ENCODE measurements at regions of chr2 and their contacts with region 1.

Region 1: DNA sequence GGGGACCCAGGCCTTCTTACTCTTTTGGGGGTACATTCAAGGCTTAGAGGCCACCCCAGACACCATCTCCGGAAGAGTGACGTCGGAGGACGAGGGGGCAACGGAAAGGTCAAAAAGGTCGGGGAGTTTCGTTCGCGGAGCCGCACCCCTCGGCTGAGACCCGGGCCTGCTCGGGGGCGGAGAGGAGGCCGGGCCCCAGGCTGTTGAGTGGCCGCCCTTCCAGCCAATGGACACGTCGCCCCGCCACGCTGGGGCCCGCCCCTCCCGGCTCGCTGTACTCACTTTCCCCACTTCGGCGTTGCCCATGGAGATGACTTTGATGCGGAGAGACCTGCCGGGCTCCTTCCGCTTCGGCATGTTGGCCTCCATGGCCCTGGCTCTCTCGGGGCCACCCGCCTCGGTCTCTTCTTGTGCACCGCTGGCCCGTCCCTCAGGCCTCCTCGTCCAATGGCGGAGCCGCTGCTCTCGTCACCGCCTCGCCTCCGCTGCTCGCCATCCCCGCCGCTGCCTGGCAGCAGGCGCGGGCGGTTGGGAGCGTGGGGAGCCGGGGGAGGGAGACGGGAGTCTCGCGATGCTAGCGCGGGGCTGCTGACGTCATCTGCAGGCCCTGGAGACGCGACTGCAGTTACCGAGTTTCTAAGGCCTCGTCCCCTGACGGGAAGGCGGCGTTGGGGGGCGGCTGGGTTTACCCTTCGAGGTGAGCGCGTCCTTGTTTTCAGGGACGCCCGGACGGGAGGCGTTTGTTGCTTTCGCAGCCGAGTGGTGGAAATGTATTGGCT is at the start of gene DNAJC27:
- H3K4me3 Mint-ChIP-seq: peak within 1 kb of the TSS; percentile 100
- H3K27ac Mint-ChIP-seq: peak within 1 kb of the TSS; percentile 99
- H3K4me1 Mint-ChIP-seq: peaks cover 10% of the 10 kb centered on the region
- H3K27me3 Mint-ChIP-seq: no peaks in the 10 kb centered on the region

Region 2: DNA sequence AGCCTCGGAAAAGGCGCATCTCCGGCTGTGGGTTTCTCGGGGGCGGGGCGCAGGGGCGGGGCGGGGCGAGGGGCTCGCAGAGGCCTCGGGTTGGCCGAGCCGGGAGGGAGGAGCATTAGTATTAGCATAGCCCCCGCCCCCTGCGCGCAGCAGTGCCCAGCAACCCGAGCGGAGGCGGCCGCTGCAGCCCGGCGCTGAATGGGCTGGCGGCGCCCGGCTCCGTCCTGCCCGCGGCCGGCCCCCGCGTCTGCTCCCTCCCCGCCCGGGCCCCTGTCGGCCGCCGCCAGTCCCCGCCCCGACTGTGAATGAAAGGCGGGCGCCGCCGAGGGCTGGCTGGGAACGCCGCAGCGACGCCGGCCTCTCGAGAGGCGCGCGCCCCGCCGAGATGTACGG is 70.2 kb after region 1 on chr2 and contains the start of gene EFR3B:
- intact Hi-C with region 1: loop called (anchors 2 kb)
- H3K4me3 Mint-ChIP-seq: peak within 1 kb of the TSS; percentile 80
- H3K27ac Mint-ChIP-seq: peak within 1 kb of the TSS; percentile 16
- H3K4me1 Mint-ChIP-seq: peaks cover 33% of the 10 kb centered on the region
- H3K27me3 Mint-ChIP-seq: peaks cover 80% of the 10 kb centered on the region

Region 3: DNA sequence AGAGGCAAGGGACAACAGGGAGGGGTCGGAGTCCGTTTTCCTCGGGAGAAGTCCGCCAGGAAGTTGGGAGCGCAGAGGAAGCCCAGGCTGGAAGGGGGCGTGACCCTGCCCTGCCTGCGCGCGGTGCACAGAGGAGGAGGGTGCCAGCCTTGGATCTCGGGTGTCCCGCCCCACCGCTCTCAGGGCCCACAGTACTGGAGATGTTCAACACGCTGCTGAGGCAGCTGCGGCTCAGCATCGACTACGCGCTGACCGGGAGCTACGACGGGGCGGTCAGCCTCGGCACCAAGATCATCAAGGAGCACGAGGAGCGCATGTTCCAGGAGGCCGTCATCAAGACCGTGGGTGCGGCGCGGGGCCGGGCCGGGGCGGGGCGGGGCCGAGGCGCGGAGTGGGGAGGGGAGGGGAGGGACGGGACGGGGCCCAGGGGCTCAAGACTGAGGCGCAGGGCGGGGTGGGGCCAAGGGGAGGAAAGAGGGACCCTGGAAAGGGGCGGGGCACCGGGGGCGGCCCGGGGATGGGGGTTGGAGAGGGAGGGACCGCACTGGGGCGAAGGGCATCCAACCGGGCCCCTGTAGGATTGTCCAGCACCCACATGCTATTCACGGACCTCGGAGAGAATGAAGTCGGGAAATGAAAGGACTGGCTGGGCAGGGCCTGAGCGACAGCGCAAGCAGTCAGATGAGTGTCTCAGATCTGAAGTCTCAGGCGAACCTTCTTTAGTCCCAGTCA is 160.0 kb after region 1 on chr2:
- intact Hi-C with region 1: loop called (anchors 1 kb)
- H3K4me3 Mint-ChIP-seq: peak overlapping the region; percentile 65
- H3K27ac Mint-ChIP-seq: no peak overlapping the region
- H3K4me1 Mint-ChIP-seq: peaks cover 26% of the 10 kb centered on the region
- H3K27me3 Mint-ChIP-seq: peaks cover 70% of the 10 kb centered on the region

Region 4: GRCh38 chr2:25197336-25198208 is 225.8 kb after region 1 on chr2:
- intact Hi-C with region 1: loop called (anchors 2 kb)
- H3K4me3 Mint-ChIP-seq: no peak overlapping the region
- H3K27ac Mint-ChIP-seq: no peak overlapping the region
- H3K4me1 Mint-ChIP-seq: peaks cover 9% of the 10 kb centered on the region
- H3K27me3 Mint-ChIP-seq: peaks cover 18% of the 10 kb centered on the region

Measured in dendritic cell treated with granulocyte-macrophage colony-stimulating factor and Interleukin-4, amounts not matched to agents 40 ng/mL and 50 ng/mL, for 4 days (primary cell).